Left lung (tissue), 14 donors: ENCODE measurements at regions of chr1 and their contacts with region 1.

Region 1: DNA sequence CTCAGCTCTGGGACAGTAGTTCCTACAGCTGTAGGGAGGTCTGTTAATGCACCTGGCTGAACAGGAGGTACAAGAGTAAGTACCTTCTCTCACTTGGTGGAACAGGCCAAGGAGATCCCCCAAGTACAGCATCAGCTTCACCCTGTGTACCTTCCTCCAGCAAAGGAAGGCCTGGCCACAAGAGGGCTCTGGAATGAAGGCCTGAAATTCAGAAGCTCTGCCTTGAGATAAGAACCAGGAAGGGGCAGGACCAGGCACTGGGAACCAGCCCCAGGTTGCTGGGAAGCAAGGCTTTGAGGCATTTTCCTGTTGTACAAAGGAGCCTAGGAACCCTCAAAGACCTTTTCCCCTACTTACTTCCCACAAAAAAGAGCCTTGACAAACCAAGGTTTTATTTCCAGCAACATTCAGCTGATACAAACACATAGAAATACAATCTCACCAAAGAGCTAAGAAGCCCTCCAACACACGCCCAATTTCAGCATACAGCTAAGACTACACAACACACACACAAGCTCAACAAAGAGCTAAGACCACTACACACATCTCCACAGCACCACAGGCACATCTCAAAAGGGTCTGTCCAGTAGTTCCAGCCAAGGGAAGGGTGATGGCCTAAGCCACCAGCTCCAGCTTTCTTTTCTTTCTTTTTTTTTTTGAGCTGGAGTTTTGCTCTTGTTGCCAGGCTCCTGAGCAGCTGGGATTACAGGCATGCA is 23.5 kb downstream of the F11R start:
- DNase-seq: peak in 2 of 4 donors; percentile 66 to 69
- ATAC-seq: peak; percentile 89
- H3K4me3 ChIP-seq: no peak overlapping the region
- H3K27ac ChIP-seq: peak overlapping the region; percentile 54 to 78
- H3K4me1 ChIP-seq: peaks cover 0 to 53% of the 10 kb centered on the region in 2 donors
- H3K27me3 ChIP-seq: no peaks in the 10 kb centered on the region
- CTCF ChIP-seq: peak; percentile 53 to 71

Region 2: GRCh38 chr1:161098210-161099068 is 101.0 kb after region 1 on chr1 and contains the start of gene KLHDC9:
- intact Hi-C with region 1: loop called in 1 of 2 experiments (anchors 5 kb)
- DNase-seq: peak in 3 of 4 donors; percentile 85 to 91 (median 85)
- ATAC-seq: peak; percentile 90
- H3K4me3 ChIP-seq: peak within 1 kb of the TSS; percentile 49 to 62
- H3K27ac ChIP-seq: peak within 1 kb of the TSS; percentile 19 to 60
- H3K4me1 ChIP-seq: peaks cover 14 to 32% of the 10 kb centered on the region in 2 donors
- H3K27me3 ChIP-seq: no peaks in the 10 kb centered on the region
- CTCF ChIP-seq: no peak
- polyA plus RNA-seq, gene KLHDC9: 4.3 to 7.7 (median 5.1) TPM